ENCODE measurements at regions of chr10 and their contacts with region 1.

Region 1: GRCh38 chr10:93352638-93353383 is 129.3 kb downstream of the MYOF start:
- DNase-seq: no peak
- H3K4me3 ChIP-seq: no peak overlapping the region
- H3K27ac ChIP-seq: no peak overlapping the region
- H3K4me1 ChIP-seq: peaks cover 0 to 5% (median 2%) of the 10 kb centered on the region in 4 experiments; a peak in 3 of 7 replicates
- H3K27me3 ChIP-seq: peaks cover 0 to 3% (median 0%) of the 10 kb centered on the region in 4 experiments; a peak in 1 of 7 replicates
- CTCF ChIP-seq: peak in 2 of 3 experiments; percentile 40 to 44; a peak in 2 of 4 replicates
- EP300 ChIP-seq: no peak
- POLR2A ChIP-seq: no peak
- RAD21 ChIP-seq: peak; percentile 66 to 68

Region 2: GRCh38 chr10:92965314-92965713 is 387.5 kb before region 1 on chr10:
- CTCF ChIA-PET with region 1: interaction called, 12 read pairs
- POLR2A ChIA-PET with region 1: no interaction called
- DNase-seq: no peak
- H3K4me3 ChIP-seq: no peak overlapping the region
- H3K27ac ChIP-seq: no peak overlapping the region
- H3K4me1 ChIP-seq: no peaks in the 10 kb centered on the region
- H3K27me3 ChIP-seq: no peaks in the 10 kb centered on the region
- CTCF ChIP-seq: peak in 2 of 3 experiments; percentile 27 to 29; a peak in 2 of 4 replicates
- EP300 ChIP-seq: no peak
- POLR2A ChIP-seq: no peak
- RAD21 ChIP-seq: peak in 1 of 2 experiments; percentile 38; a peak in 2 of 4 replicates

Region 3: DNA sequence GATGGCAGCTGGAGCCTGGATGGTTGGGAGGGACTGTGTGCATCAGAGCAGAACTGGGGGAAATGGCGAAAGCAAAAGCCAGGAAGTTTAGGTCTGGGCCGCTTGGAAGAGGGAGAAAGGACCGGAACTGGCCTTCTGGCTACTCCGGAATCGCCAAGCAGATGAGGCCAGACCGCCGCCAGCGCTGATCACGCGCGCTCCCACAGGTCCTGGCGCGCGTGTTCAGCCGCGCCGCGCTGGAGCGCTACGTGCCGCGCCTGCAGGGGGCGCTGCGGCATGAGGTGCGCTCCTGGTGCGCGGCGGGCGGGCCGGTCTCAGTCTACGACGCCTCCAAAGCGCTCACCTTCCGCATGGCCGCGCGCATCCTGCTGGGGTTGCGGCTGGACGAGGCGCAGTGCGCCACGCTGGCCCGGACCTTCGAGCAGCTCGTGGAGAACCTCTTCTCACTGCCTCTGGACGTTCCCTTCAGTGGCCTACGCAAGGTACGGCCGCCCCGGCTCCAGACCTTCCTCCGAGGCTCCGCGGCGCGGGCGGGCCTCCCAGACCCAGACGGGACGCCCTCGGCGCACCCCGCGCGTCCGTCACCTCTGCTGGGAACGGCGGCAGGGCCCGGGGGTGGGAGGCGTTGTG is 290.2 kb before region 1 on chr10:
- CTCF ChIA-PET with region 1: interaction called, 95 read pairs
- POLR2A ChIA-PET with region 1: no interaction called
- DNase-seq: peak in 1 of 2 experiments; percentile 82
- H3K4me3 ChIP-seq: peak overlapping the region; percentile 29 to 59 (median 46)
- H3K27ac ChIP-seq: no peak overlapping the region
- H3K4me1 ChIP-seq: peaks cover 3 to 33% (median 26%) of the 10 kb centered on the region in 4 experiments
- H3K27me3 ChIP-seq: peaks cover 88 to 100% (median 92%) of the 10 kb centered on the region in 4 experiments
- CTCF ChIP-seq: peak; percentile 73 to 82 (median 74)
- EP300 ChIP-seq: no peak
- POLR2A ChIP-seq: no peak
- RAD21 ChIP-seq: peak; percentile 48 to 52; a peak in 3 of 4 replicates

Region 4: GRCh38 chr10:93115661-93116383 is 237.0 kb before region 1 on chr10:
- CTCF ChIA-PET with region 1: interaction called, 23 read pairs
- POLR2A ChIA-PET with region 1: no interaction called
- DNase-seq: peak; percentile 53 to 94
- H3K4me3 ChIP-seq: no peak overlapping the region
- H3K27ac ChIP-seq: no peak overlapping the region; the same call in 1 of the 2 replicates
- H3K4me1 ChIP-seq: no peaks in the 10 kb centered on the region
- H3K27me3 ChIP-seq: peaks cover 0 to 2% (median 0%) of the 10 kb centered on the region in 4 experiments; a peak in 1 of 7 replicates
- CTCF ChIP-seq: peak; percentile 69 to 77 (median 72)
- EP300 ChIP-seq: no peak
- POLR2A ChIP-seq: no peak
- RAD21 ChIP-seq: peak; percentile 68 to 76

Region 5: DNA sequence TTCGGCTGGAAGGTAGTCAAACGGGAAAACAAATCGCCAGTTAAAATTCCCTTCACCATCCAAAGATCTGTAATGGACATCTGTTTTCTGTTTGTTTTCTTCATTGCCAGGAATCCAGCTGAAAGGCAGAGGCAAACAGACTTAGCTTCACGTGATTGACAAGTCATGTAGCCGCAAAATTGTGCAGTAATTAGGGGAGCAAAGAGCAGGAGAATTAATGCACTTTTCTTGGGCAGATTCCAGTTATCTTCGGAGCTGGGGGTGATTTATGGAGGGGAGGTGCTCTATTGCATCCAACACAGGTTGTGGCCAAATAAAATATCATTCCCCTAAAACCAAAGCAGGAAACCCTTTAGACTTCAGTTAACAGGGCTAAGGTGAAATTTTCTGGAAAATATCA is 32.9 kb before region 1 on chr10:
- CTCF ChIA-PET with region 1: interaction called, 11 read pairs
- POLR2A ChIA-PET with region 1: no interaction called
- DNase-seq: no peak
- H3K4me3 ChIP-seq: no peak overlapping the region
- H3K27ac ChIP-seq: no peak overlapping the region
- H3K4me1 ChIP-seq: no peaks in the 10 kb centered on the region
- H3K27me3 ChIP-seq: no peaks in the 10 kb centered on the region
- CTCF ChIP-seq: no peak
- EP300 ChIP-seq: no peak
- POLR2A ChIP-seq: no peak
- RAD21 ChIP-seq: no peak

Region 6: GRCh38 chr10:93369588-93370164 is 16.9 kb after region 1 on chr10:
- CTCF ChIA-PET with region 1: interaction called, 20 read pairs
- POLR2A ChIA-PET with region 1: no interaction called
- DNase-seq: no peak
- H3K4me3 ChIP-seq: no peak overlapping the region
- H3K27ac ChIP-seq: no peak overlapping the region
- H3K4me1 ChIP-seq: peaks cover 0 to 6% (median 2%) of the 10 kb centered on the region in 4 experiments; a peak in 2 of 7 replicates
- H3K27me3 ChIP-seq: no peaks in the 10 kb centered on the region
- CTCF ChIP-seq: no peak
- EP300 ChIP-seq: no peak
- POLR2A ChIP-seq: no peak
- RAD21 ChIP-seq: no peak

Region 7: DNA sequence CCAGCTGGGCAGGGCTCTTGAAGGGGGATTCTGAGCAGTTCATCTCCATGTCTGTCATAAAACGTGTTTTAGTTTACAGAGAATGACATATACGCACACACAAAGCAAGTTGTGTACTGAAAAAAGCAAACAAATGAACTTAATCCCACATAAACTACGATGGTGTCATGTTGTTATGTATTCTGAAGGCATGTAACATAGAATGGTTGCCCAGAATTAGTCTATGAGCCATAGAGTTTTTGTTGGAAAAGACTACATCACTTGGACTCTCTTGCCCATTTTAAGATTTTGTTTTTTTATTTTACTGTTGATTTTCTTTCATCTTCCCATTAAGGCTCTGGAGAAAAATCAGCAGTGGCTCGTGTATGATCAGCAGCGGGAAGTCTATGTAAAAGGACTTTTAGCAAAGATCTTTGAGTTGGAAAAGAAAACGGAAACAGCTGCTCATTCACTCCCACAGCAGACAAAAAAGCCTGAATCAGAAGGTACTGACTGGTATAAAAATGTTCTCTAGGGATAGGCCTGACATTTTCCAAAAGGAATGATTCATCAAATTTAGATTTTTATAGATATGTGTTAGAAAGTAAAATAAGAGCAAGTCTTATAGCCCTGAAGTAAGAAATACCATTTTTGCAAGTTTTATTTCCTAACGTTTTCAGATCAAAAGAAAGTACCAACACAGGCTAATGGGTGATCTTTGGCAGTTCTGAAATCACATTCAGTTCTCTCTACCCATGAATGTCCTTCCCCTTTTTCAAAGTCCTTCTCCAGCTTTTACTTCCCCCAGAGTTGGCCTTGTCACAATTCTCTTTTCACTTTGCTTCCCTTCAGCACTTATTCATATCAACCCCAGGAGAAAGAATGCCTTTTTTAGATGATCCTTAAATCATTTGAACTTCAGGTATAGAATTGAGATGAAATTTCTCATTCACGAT is 162.5 kb after region 1 on chr10:
- CTCF ChIA-PET with region 1: interaction called, 33 read pairs
- POLR2A ChIA-PET with region 1: no interaction called
- DNase-seq: no peak
- H3K4me3 ChIP-seq: no peak overlapping the region
- H3K27ac ChIP-seq: no peak overlapping the region
- H3K4me1 ChIP-seq: no peaks in the 10 kb centered on the region; a peak in 1 of 7 replicates
- H3K27me3 ChIP-seq: no peaks in the 10 kb centered on the region
- CTCF ChIP-seq: no peak
- EP300 ChIP-seq: no peak
- POLR2A ChIP-seq: no peak
- RAD21 ChIP-seq: no peak

Region 8: GRCh38 chr10:93580828-93581227 is 228.0 kb after region 1 on chr10:
- CTCF ChIA-PET with region 1: no interaction called
- POLR2A ChIA-PET with region 1: no interaction called
- DNase-seq: no peak
- H3K4me3 ChIP-seq: no peak overlapping the region
- H3K27ac ChIP-seq: no peak overlapping the region
- H3K4me1 ChIP-seq: no peaks in the 10 kb centered on the region
- H3K27me3 ChIP-seq: no peaks in the 10 kb centered on the region
- CTCF ChIP-seq: no peak
- EP300 ChIP-seq: no peak
- POLR2A ChIP-seq: no peak
- RAD21 ChIP-seq: no peak

Region 9: GRCh38 chr10:93591065-93591808 is 238.4 kb after region 1 on chr10:
- CTCF ChIA-PET with region 1: no interaction called
- POLR2A ChIA-PET with region 1: no interaction called
- DNase-seq: no peak
- H3K4me3 ChIP-seq: no peak overlapping the region
- H3K27ac ChIP-seq: no peak overlapping the region
- H3K4me1 ChIP-seq: peaks cover 3 to 5% (median 4%) of the 10 kb centered on the region in 4 experiments; a peak in 6 of 7 replicates
- H3K27me3 ChIP-seq: peaks cover 0 to 1% (median 0%) of the 10 kb centered on the region in 4 experiments; a peak in 2 of 7 replicates
- CTCF ChIP-seq: no peak
- EP300 ChIP-seq: no peak
- POLR2A ChIP-seq: no peak
- RAD21 ChIP-seq: no peak